ENCODE measurements at regions of chr2 and their contacts with region 1.

Region 1: DNA sequence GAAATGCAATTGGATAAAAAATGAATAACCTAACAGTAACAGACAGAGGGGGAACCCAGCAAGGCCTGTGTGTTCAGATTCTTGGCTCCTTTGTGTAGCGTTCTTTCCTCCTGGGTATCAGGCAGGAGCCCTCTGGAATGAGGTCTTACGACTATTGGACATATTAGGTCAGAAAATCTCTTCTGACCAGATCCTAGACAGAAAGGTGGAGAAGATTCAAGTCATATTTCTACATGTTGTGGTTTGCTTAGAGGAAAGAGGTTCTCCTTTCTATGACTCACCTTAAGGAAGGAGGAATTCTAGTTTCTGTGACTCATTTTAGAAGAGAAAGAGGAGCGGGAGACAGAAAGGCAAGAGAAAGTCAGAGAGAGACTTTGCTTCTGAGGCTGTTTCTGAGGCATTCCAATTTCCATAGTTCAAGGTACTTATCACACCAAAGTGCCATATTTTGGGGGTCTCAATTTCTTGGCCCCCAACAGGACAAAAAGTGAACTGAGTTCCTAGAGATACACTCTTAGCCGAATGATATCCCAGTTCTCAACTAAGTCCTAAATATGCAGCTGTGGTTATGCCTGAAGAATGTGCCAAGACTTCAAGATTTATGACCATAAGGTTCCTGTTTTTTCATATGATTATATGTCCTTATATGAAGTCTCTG is 618.6 kb downstream of the ZEB2 start:
- DNase-seq: peak; percentile 90
- H3K4me3 ChIP-seq: peak overlapping the region; percentile 16 to 35 (median 26)
- H3K27ac ChIP-seq: peak overlapping the region; percentile 87
- H3K4me1 ChIP-seq: peaks cover 18% of the 10 kb centered on the region
- H3K27me3 ChIP-seq: no peaks in the 10 kb centered on the region
- CTCF ChIP-seq: no peak

Region 2: GRCh38 chr2:144111437-144111836 is 210.1 kb after region 1 on chr2:
- CTCF ChIA-PET with region 1: no interaction called
- dilution Hi-C with region 1: no loop called
- in situ Hi-C with region 1: no loop called
- intact Hi-C with region 1: loop called (anchors 5 kb)
- DNase-seq: peak; percentile 74
- H3K4me3 ChIP-seq: no peak overlapping the region
- H3K27ac ChIP-seq: no peak overlapping the region
- H3K4me1 ChIP-seq: peaks cover 10% of the 10 kb centered on the region
- H3K27me3 ChIP-seq: no peaks in the 10 kb centered on the region
- CTCF ChIP-seq: no peak

Measured in mammary epithelial cell (primary cell).